ENCODE measurements at regions of chr19 and their contacts with region 1.

Region 1: DNA sequence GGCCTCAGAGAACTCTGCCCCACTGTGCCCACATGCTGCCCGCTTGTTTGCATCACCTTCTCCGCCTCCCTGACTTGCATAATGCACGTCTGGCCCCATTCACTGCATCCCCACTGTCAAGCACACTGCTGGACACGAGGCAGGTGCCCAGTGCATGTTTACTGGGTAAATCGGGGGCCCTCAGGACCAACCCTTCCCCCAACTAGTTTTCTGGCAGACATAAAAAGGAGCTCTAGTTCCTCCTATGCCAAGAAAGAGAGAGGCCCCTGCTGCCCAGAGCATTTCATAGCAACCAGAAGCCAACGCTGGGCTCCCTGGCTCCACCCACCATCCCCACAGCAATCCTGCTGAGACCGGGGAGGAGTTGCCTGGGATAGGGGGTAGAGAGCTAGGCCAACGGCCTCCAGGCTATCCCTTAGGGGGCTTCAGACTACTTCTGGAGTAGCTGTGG is 23.3 kb downstream of the ANKRD27 start:
- DNase-seq: no peak
- ATAC-seq: peak; percentile 68
- H3K4me3 ChIP-seq: no peak overlapping the region
- H3K27ac ChIP-seq: no peak overlapping the region
- H3K4me1 ChIP-seq: peaks cover 2% of the 10 kb centered on the region; the same call in 1 of the 2 replicates
- H3K27me3 ChIP-seq: no peaks in the 10 kb centered on the region
- CTCF ChIP-seq: no peak

Region 2: DNA sequence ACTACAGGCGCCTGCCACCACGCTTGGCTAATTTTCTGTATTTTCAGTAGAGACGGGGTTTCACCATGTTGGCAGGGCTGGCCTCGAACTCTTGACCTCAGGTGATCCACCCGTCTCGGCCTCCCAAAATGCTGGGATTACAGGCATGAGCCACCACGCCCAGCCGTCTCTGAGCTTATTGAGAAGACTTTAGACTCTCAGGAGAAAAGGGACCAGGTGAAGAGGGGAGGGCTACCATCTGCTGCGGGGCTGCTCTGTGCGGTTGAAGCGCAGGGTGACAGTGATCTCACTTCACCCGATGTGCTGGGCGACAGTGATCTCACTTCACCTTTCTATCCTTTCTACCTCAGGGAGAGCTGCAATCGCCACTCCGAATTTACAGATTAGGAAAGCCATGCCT is 45.4 kb before region 1 on chr19:
- CTCF ChIA-PET with region 1: no interaction called
- POLR2A ChIA-PET with region 1: interaction called, 11 read pairs
- in situ Hi-C with region 1: no loop called
- intact Hi-C with region 1: no loop called
- DNase-seq: no peak
- ATAC-seq: no peak
- H3K4me3 ChIP-seq: no peak overlapping the region
- H3K27ac ChIP-seq: no peak overlapping the region
- H3K4me1 ChIP-seq: no peaks in the 10 kb centered on the region
- H3K27me3 ChIP-seq: no peaks in the 10 kb centered on the region
- CTCF ChIP-seq: no peak

Region 3: GRCh38 chr19:32630338-32630737 is 21.4 kb before region 1 on chr19:
- CTCF ChIA-PET with region 1: no interaction called
- POLR2A ChIA-PET with region 1: no interaction called
- in situ Hi-C with region 1: no loop called
- intact Hi-C with region 1: no loop called
- DNase-seq: no peak
- ATAC-seq: peak; percentile 52
- H3K4me3 ChIP-seq: no peak overlapping the region
- H3K27ac ChIP-seq: no peak overlapping the region
- H3K4me1 ChIP-seq: no peaks in the 10 kb centered on the region
- H3K27me3 ChIP-seq: no peaks in the 10 kb centered on the region
- CTCF ChIP-seq: no peak